ENCODE measurements at regions of chr11 and their contacts with region 1.

Region 1: DNA sequence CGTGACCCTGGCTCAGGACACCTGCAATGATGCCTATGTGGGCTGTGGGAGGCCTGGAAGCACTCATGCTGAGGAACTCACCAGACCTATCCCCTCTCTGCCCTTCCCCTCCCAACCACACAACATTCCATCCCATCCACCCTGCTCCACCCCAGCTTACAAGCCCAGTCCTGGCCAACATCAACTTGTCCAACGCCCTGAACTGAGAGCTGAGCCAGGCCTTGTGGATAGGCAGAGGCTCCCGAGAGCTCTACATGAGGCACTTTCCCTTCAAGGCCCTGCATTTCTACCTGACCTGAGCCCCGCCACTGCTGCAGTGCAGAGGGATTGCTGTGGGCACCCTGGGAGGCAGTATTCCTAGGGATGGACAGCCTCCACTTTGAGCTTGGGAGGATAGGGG is 112.4 kb downstream of the PDE2A start:
- DNase-seq: no peak
- H3K4me3 ChIP-seq: no peak overlapping the region
- H3K4me3 Mint-ChIP-seq: no peak overlapping the region
- H3K27ac ChIP-seq: no peak overlapping the region
- H3K27ac Mint-ChIP-seq: no peak overlapping the region
- H3K4me1 ChIP-seq: no peaks in the 10 kb centered on the region
- H3K4me1 Mint-ChIP-seq: peaks cover 2% of the 10 kb centered on the region
- H3K27me3 ChIP-seq: peaks cover 0 to 8% of the 10 kb centered on the region in 2 donors
- H3K27me3 Mint-ChIP-seq: peaks cover 0 to 10% (median 4%) of the 10 kb centered on the region in 3 donors
- CTCF ChIP-seq: no peak

Region 2: DNA sequence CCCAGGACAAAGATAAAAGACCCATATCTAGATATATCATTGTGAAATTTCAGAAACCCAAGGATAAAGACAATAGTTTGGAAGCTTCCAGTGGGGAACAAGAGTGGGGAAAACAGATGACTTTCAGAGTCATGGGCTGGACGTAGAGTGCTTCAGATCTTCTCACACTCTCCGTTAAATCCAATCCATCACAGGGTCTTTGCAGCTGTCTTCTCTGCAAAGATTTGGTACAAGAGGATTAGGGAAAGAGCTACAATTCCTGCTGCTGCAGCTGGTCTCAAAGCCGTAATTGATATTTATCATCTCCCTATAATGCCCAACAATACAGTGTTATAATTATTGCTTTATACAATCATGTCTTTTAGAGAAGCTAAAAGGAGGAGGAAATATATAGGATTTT is 64.1 kb before region 1 on chr11:
- intact Hi-C with region 1: loop called in 1 of 2 experiments (anchors 5 kb)
- DNase-seq: no peak
- H3K4me3 ChIP-seq: no peak overlapping the region
- H3K4me3 Mint-ChIP-seq: no peak overlapping the region
- H3K27ac ChIP-seq: no peak overlapping the region
- H3K27ac Mint-ChIP-seq: no peak overlapping the region
- H3K4me1 ChIP-seq: no peaks in the 10 kb centered on the region
- H3K4me1 Mint-ChIP-seq: no peaks in the 10 kb centered on the region
- H3K27me3 ChIP-seq: no peaks in the 10 kb centered on the region
- H3K27me3 Mint-ChIP-seq: peaks cover 6 to 9% (median 8%) of the 10 kb centered on the region in 3 donors
- CTCF ChIP-seq: no peak